ENCODE measurements at regions of chr22 and their contacts with region 1.

Region 1: GRCh38 chr22:19432133-19432851 is at the start of gene MRPL40:
- DNase-seq: peak; percentile 94
- ATAC-seq: peak; percentile 86
- H3K4me3 Mint-ChIP-seq: peak within 1 kb of the TSS; percentile 75
- H3K27ac Mint-ChIP-seq: peak within 1 kb of the TSS; percentile 96
- H3K4me1 Mint-ChIP-seq: peaks cover 43% of the 10 kb centered on the region
- H3K27me3 Mint-ChIP-seq: no peaks in the 10 kb centered on the region
- total RNA-seq, gene MRPL40: 34.1 to 34.4 TPM

Region 2: DNA sequence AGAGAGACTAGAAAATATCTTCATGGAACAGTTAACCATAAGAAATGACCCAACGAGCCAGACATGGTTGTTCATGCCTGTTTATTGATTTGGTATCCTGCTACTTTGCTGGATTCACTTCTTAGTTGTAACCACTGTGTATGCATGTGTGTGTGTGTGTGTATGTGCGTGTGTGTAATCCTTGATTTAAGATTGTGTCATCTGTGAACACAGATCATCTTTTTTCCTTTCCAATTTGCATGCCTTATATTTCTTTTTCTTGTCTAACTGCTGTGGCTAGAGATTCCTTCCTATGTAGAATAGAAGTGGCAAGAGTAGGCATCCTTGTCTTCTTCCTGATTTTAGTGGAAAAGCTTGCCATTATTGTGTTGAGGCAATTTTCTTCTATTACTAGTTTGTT is 124.4 kb before region 1 on chr22:
- CTCF ChIA-PET with region 1: no interaction called
- POLR2A ChIA-PET with region 1: no interaction called
- intact Hi-C with region 1: no loop called
- DNase-seq: no peak
- ATAC-seq: no peak
- H3K4me3 Mint-ChIP-seq: no peak overlapping the region
- H3K27ac Mint-ChIP-seq: no peak overlapping the region
- H3K4me1 Mint-ChIP-seq: no peaks in the 10 kb centered on the region
- H3K27me3 Mint-ChIP-seq: no peaks in the 10 kb centered on the region

Region 3: GRCh38 chr22:19447388-19448075 is 15.2 kb after region 1 on chr22 and contains the start of gene C22orf39:
- CTCF ChIA-PET with region 1: interaction called, 4 read pairs
- POLR2A ChIA-PET with region 1: interaction called, 8 read pairs
- intact Hi-C with region 1: loop called (anchors 1 kb)
- DNase-seq: peak; percentile 91
- ATAC-seq: peak; percentile 83
- H3K4me3 Mint-ChIP-seq: peak within 1 kb of the TSS; percentile 87
- H3K27ac Mint-ChIP-seq: peak within 1 kb of the TSS; percentile 98
- H3K4me1 Mint-ChIP-seq: peaks cover 36% of the 10 kb centered on the region
- H3K27me3 Mint-ChIP-seq: no peaks in the 10 kb centered on the region
- total RNA-seq, gene C22orf39: 21.9 to 22.2 TPM

Measured in activated CD4-positive, alpha-beta T cell treated with anti-CD3 and anti-CD28 coated beads for 36 hours (primary cell).